Activated naive CD4-positive, alpha-beta T cell treated with anti-CD3 and anti-CD28 coated beads for 36 hours (primary cell): ENCODE measurements at regions of chr3 and their contacts with region 1.

Region 1: DNA sequence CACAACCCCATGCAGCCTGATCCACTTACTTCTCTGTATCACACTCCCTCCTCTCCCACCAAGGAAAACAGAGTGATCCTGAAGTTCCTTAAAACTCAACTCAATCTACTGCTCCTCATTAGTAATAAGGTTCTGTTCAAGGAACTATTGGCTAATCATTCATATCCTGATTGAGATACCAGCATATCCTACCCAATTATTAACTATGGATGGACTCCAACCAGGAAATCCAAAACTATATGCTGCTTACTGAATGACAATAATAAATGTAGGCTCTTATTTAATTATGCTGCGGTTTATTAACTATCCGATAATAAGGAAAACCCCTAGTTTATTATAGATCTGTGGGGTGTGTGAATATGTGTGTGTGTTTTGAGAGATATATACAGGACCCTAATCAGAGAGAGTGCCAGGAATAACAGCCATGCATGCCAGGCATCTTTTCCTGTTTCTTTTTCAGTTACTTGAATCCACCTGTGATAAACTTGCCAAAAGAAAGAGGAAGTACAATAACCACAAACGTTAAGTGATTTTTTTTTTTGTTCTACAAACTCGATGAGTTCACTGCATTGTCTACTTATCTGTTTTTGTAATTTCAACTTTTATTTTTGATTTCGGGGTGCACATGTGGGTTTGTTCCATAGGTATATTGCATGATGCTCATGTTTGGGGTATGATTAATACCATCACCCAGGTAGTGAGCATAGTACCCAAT is 1031.7 kb upstream of the CFAP20DC start:
- DNase-seq: no peak
- H3K4me3 Mint-ChIP-seq: peak overlapping the region; percentile 47
- H3K27ac Mint-ChIP-seq: peak overlapping the region; percentile 98
- H3K4me1 Mint-ChIP-seq: peaks cover 67% of the 10 kb centered on the region
- H3K27me3 Mint-ChIP-seq: no peaks in the 10 kb centered on the region

Region 2: DNA sequence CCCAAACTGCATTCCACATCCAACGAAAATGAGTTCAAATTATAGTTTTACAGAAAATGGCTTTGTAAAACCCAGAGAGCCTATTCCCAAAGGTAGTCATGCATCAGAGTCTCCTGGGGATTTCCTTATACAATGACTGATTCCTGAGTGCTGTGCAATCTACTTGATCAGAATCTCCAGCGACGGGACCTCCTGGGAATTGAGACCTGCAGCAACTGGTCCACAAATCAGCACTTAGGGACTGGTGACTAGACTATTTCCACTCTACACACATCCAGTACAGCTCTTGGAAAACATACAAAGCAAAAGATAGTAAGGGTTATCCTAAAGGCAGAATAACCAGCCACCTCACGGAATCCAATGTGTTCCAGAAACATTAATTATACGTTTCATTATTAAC is 160.7 kb before region 1 on chr3:
- CTCF ChIA-PET with region 1: no interaction called
- intact Hi-C with region 1: no loop called
- DNase-seq: no peak
- H3K4me3 Mint-ChIP-seq: no peak overlapping the region
- H3K27ac Mint-ChIP-seq: no peak overlapping the region
- H3K4me1 Mint-ChIP-seq: peaks cover 83% of the 10 kb centered on the region
- H3K27me3 Mint-ChIP-seq: no peaks in the 10 kb centered on the region

Region 3: DNA sequence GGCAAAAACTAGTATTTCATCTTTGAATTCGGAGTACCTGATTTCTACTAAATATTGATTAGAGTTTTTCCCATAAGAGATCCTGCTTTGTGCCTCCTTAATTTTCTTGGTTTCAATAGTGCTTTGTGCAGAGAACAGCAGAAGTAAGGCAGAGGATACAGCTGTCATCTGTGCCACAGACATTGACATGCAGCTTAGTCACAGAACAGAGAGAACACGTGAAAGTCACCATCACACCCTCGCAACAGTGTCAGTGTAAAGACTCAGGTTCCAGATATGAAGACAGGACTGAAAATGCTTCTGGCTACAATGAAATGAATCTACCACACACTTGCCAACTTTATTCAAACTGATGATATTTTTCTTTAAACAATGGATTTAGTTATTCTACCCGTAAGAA is 89.0 kb before region 1 on chr3:
- CTCF ChIA-PET with region 1: no interaction called
- intact Hi-C with region 1: loop called (anchors 1 kb)
- DNase-seq: peak; percentile 76
- H3K4me3 Mint-ChIP-seq: peak overlapping the region; percentile 43
- H3K27ac Mint-ChIP-seq: peak overlapping the region; percentile 84
- H3K4me1 Mint-ChIP-seq: peaks cover 96% of the 10 kb centered on the region
- H3K27me3 Mint-ChIP-seq: no peaks in the 10 kb centered on the region

Region 4: GRCh38 chr3:60025096-60026050 is 56.2 kb before region 1 on chr3:
- CTCF ChIA-PET with region 1: interaction called, 5 read pairs
- intact Hi-C with region 1: loop called (anchors 2 kb)
- DNase-seq: no peak
- H3K4me3 Mint-ChIP-seq: no peak overlapping the region
- H3K27ac Mint-ChIP-seq: peak overlapping the region; percentile 92
- H3K4me1 Mint-ChIP-seq: peaks cover 91% of the 10 kb centered on the region
- H3K27me3 Mint-ChIP-seq: no peaks in the 10 kb centered on the region

Region 5: GRCh38 chr3:60064210-60065178 is 17.0 kb before region 1 on chr3:
- CTCF ChIA-PET with region 1: interaction called, 6 read pairs
- intact Hi-C with region 1: loop called (anchors 2 kb)
- DNase-seq: peak; percentile 70
- H3K4me3 Mint-ChIP-seq: peak overlapping the region; percentile 11
- H3K27ac Mint-ChIP-seq: peak overlapping the region; percentile 88
- H3K4me1 Mint-ChIP-seq: peaks cover 89% of the 10 kb centered on the region
- H3K27me3 Mint-ChIP-seq: no peaks in the 10 kb centered on the region

Region 6: GRCh38 chr3:60365360-60365759 is 283.8 kb after region 1 on chr3:
- CTCF ChIA-PET with region 1: no interaction called
- intact Hi-C with region 1: loop called (anchors 5 kb)
- DNase-seq: no peak
- H3K4me3 Mint-ChIP-seq: no peak overlapping the region
- H3K27ac Mint-ChIP-seq: no peak overlapping the region
- H3K4me1 Mint-ChIP-seq: peaks cover 28% of the 10 kb centered on the region
- H3K27me3 Mint-ChIP-seq: peaks cover 2% of the 10 kb centered on the region